ENCODE measurements at regions of chr2 and their contacts with region 1.

Region 1: GRCh38 chr2:148509288-148509902 is 135.2 kb upstream of the EPC2 start:
- DNase-seq: peak; percentile 91
- H3K4me3 Mint-ChIP-seq: peak overlapping the region; percentile 18
- H3K27ac Mint-ChIP-seq: peak overlapping the region; percentile 30
- H3K4me1 Mint-ChIP-seq: peaks cover 32% of the 10 kb centered on the region
- H3K27me3 Mint-ChIP-seq: no peaks in the 10 kb centered on the region

Region 2: GRCh38 chr2:147937744-147938349 is 571.5 kb before region 1 on chr2:
- CTCF ChIA-PET with region 1: interaction called, 14 read pairs
- DNase-seq: no peak
- H3K4me3 Mint-ChIP-seq: no peak overlapping the region
- H3K27ac Mint-ChIP-seq: no peak overlapping the region
- H3K4me1 Mint-ChIP-seq: no peaks in the 10 kb centered on the region
- H3K27me3 Mint-ChIP-seq: no peaks in the 10 kb centered on the region

Region 3: DNA sequence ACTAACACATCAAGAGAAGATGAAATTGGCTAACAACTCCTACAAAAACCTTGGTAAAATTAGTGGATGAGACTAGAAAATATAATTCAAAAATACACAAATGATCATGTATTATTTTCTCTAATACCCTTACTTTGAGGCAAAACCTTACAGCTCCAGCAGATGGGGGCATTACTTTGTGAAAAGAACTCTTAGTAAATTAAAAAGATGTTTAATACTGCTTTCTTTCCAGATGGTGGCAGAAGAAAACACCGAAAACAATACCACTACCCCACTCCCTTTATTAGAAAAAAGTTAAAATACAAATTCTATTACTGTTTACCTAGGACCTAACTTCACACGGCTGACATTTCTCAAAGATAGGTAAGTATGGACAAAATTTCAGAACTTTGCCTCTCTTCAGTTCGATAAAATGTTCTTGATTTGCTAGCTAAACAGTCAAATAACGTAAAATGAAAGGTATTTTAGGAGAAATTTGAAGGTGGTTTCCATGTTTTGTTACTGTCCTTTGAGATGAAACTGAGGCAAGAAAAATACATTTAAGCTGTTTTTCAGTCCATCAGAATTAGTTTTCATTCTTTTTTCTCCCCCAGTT is 519.5 kb before region 1 on chr2:
- CTCF ChIA-PET with region 1: interaction called, 53 read pairs
- DNase-seq: peak; percentile 43
- H3K4me3 Mint-ChIP-seq: no peak overlapping the region
- H3K27ac Mint-ChIP-seq: no peak overlapping the region
- H3K4me1 Mint-ChIP-seq: no peaks in the 10 kb centered on the region
- H3K27me3 Mint-ChIP-seq: no peaks in the 10 kb centered on the region

Region 4: GRCh38 chr2:148475626-148476025 is 33.8 kb before region 1 on chr2:
- CTCF ChIA-PET with region 1: no interaction called
- DNase-seq: no peak
- H3K4me3 Mint-ChIP-seq: no peak overlapping the region
- H3K27ac Mint-ChIP-seq: no peak overlapping the region
- H3K4me1 Mint-ChIP-seq: no peaks in the 10 kb centered on the region
- H3K27me3 Mint-ChIP-seq: peaks cover 9% of the 10 kb centered on the region

Region 5: DNA sequence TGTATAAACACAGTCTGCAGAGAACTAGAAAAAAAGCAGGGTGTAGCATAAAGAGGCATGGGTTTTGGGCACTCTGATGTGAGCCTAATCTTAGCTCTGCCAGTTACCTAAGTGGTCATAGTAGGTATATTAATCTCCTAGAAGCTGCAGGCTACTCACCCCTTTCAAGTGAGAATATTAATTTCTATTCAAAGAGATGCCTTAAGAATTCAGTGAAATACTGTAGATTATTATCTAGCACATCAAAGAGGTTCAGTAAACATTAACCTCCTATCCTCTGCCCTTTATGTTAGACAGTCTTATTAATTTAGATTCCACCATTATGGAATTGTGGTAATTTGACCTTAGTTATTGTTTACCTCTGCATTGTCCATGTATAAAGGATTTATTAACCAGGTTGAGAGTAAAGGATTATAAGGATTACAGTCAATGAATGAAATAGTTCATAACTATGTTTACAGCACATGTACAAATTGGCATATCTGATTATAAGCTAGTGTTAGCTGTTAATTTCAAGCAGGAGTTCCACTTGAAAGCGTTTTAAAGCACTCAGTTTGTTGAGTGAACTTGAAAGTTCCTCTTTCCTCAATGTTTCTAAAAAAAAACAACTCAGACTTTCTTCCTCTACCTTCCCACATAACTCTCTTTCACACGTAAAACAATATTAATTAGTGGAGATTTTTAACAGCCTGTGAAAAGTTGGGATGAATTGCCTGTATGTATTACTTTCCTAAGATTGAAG is 15.4 kb before region 1 on chr2:
- CTCF ChIA-PET with region 1: interaction called, 12 read pairs
- DNase-seq: no peak
- H3K4me3 Mint-ChIP-seq: no peak overlapping the region
- H3K27ac Mint-ChIP-seq: no peak overlapping the region
- H3K4me1 Mint-ChIP-seq: no peaks in the 10 kb centered on the region
- H3K27me3 Mint-ChIP-seq: no peaks in the 10 kb centered on the region

Region 6: GRCh38 chr2:148524519-148524919 is 15.1 kb after region 1 on chr2:
- CTCF ChIA-PET with region 1: interaction called, 19 read pairs
- DNase-seq: peak; percentile 79
- H3K4me3 Mint-ChIP-seq: peak overlapping the region; percentile 9
- H3K27ac Mint-ChIP-seq: peak overlapping the region; percentile 88
- H3K4me1 Mint-ChIP-seq: peaks cover 78% of the 10 kb centered on the region
- H3K27me3 Mint-ChIP-seq: no peaks in the 10 kb centered on the region